Colonic mucosa (tissue), 4 donors: ENCODE measurements at regions of chr6 and their contacts with region 1.

Region 1: GRCh38 chr6:134822920-134823709 is 126.8 kb downstream of the ALDH8A1 start:
- DNase-seq: peak; percentile 53
- H3K4me3 ChIP-seq: no peak overlapping the region
- H3K27ac ChIP-seq: no peak overlapping the region
- H3K4me1 ChIP-seq: no peaks in the 10 kb centered on the region
- H3K27me3 ChIP-seq: no peaks in the 10 kb centered on the region
- CTCF ChIP-seq: peak; percentile 83

Region 2: GRCh38 chr6:134161036-134161435 is 662.1 kb before region 1 on chr6:
- intact Hi-C with region 1: loop called (anchors 5 kb)
- DNase-seq: no peak
- H3K4me3 ChIP-seq: no peak overlapping the region
- H3K27ac ChIP-seq: no peak overlapping the region
- H3K4me1 ChIP-seq: no peaks in the 10 kb centered on the region
- H3K27me3 ChIP-seq: no peaks in the 10 kb centered on the region
- CTCF ChIP-seq: no peak

Region 3: GRCh38 chr6:134174672-134175198 is 648.4 kb before region 1 on chr6:
- intact Hi-C with region 1: loop called (anchors 1 kb)
- DNase-seq: peak; percentile 96
- H3K4me3 ChIP-seq: peak overlapping the region; percentile 60
- H3K27ac ChIP-seq: peak overlapping the region; percentile 81
- H3K4me1 ChIP-seq: no peaks in the 10 kb centered on the region
- H3K27me3 ChIP-seq: no peaks in the 10 kb centered on the region
- CTCF ChIP-seq: no peak

Region 4: GRCh38 chr6:134741200-134741536 is 81.9 kb before region 1 on chr6:
- intact Hi-C with region 1: no loop called
- DNase-seq: no peak
- H3K4me3 ChIP-seq: no peak overlapping the region
- H3K27ac ChIP-seq: no peak overlapping the region
- H3K4me1 ChIP-seq: no peaks in the 10 kb centered on the region
- H3K27me3 ChIP-seq: no peaks in the 10 kb centered on the region
- CTCF ChIP-seq: no peak

Region 5: GRCh38 chr6:134875367-134875766 is 52.3 kb after region 1 on chr6:
- intact Hi-C with region 1: loop called (anchors 5 kb)
- DNase-seq: no peak
- H3K4me3 ChIP-seq: no peak overlapping the region
- H3K27ac ChIP-seq: no peak overlapping the region
- H3K4me1 ChIP-seq: no peaks in the 10 kb centered on the region
- H3K27me3 ChIP-seq: no peaks in the 10 kb centered on the region
- CTCF ChIP-seq: no peak